PC-9 (cell line): ENCODE measurements at regions of chr11 and their contacts with region 1.

Region 1: DNA sequence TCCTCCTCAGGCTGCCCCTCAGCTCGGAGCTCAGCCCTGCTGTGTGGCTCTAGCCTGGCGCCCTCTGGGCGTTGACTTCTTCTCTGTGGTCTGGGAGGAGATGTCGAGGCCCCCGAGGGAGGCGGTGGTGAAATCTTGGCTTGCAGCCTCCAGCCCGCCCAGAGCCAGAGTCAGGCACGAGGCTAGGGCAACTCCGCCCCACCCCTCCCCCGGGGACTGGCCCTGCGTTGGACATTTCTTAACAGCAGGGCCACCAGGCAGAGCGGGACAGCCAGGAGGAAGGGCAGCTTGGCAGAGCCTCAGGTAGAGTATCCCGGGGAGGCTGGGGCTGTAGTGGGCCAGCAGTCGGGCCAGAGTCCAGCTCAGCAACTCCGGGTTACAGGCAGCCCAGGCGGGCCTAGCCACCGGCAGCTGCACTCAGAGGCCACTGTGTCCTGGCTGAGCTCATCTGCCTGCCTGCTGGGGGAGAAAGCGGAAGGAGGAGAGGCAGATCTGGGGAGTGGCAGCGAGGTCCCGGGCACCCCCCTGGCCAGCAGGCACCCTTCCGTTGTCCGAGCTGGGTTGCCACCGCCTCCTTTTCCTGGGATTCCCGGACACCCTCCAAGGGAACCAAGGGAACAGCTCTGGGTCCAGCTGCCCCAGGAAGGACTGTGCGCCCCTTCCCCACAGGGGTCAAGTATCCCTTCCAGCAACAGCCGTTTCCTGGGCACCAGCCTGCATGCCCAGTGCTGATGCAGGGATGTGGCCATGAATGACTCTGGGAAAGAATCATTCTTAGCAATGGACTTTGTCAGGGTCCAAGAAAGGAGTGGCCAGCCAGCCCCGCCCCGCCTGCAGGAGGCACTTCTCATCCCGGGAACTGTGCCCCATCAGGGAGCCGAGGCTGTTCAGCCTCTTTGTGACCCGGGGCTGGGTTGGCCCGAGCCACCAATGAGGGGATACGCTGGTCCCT is at the start of gene ALDH3B1:
- DNase-seq: peak; percentile 90 to 98
- H3K4me3 ChIP-seq: peak within 1 kb of the TSS; percentile 59
- H3K27ac ChIP-seq: peak within 1 kb of the TSS; percentile 93
- H3K4me1 ChIP-seq: peaks cover 69% of the 10 kb centered on the region
- H3K27me3 ChIP-seq: no peaks in the 10 kb centered on the region
- CTCF ChIP-seq: no peak
- total RNA-seq, gene ALDH3B1: 98.1 and 104 TPM in 2 replicates

Region 2: GRCh38 chr11:66842896-66843775 is 1167.2 kb before region 1 on chr11 and contains the start of gene RCE1:
- CTCF ChIA-PET with region 1: no interaction called
- POLR2A ChIA-PET with region 1: no interaction called
- intact Hi-C with region 1: no loop called
- DNase-seq: peak; percentile 79 to 93
- H3K4me3 ChIP-seq: peak within 1 kb of the TSS; percentile 94
- H3K27ac ChIP-seq: peak within 1 kb of the TSS; percentile 67
- H3K4me1 ChIP-seq: peaks cover 52% of the 10 kb centered on the region
- H3K27me3 ChIP-seq: no peaks in the 10 kb centered on the region
- CTCF ChIP-seq: no peak
- total RNA-seq, gene RCE1: 42.1 and 42.9 TPM in 2 replicates

Region 3: GRCh38 chr11:68020575-68020974 is 10.2 kb after region 1 on chr11:
- CTCF ChIA-PET with region 1: interaction called, 8 read pairs
- POLR2A ChIA-PET with region 1: interaction called, 4 read pairs
- intact Hi-C with region 1: loop called (anchors 1 kb)
- DNase-seq: peak in 1 of 2 experiments; percentile 88
- H3K4me3 ChIP-seq: no peak overlapping the region
- H3K27ac ChIP-seq: no peak overlapping the region
- H3K4me1 ChIP-seq: peaks cover 45% of the 10 kb centered on the region
- H3K27me3 ChIP-seq: no peaks in the 10 kb centered on the region
- CTCF ChIP-seq: peak; percentile 45

Region 4: GRCh38 chr11:68030318-68031138 is 20.2 kb after region 1 on chr11 and contains the start of gene NDUFS8:
- CTCF ChIA-PET with region 1: no interaction called
- POLR2A ChIA-PET with region 1: interaction called, 4 read pairs
- intact Hi-C with region 1: loop called (anchors 1 kb)
- DNase-seq: peak; percentile 96 to 99
- H3K4me3 ChIP-seq: peak within 1 kb of the TSS; percentile 91
- H3K27ac ChIP-seq: peak within 1 kb of the TSS; percentile 87
- H3K4me1 ChIP-seq: peaks cover 36% of the 10 kb centered on the region
- H3K27me3 ChIP-seq: no peaks in the 10 kb centered on the region
- CTCF ChIP-seq: no peak
- total RNA-seq, gene NDUFS8: 270 and 275 TPM in 2 replicates

Region 5: DNA sequence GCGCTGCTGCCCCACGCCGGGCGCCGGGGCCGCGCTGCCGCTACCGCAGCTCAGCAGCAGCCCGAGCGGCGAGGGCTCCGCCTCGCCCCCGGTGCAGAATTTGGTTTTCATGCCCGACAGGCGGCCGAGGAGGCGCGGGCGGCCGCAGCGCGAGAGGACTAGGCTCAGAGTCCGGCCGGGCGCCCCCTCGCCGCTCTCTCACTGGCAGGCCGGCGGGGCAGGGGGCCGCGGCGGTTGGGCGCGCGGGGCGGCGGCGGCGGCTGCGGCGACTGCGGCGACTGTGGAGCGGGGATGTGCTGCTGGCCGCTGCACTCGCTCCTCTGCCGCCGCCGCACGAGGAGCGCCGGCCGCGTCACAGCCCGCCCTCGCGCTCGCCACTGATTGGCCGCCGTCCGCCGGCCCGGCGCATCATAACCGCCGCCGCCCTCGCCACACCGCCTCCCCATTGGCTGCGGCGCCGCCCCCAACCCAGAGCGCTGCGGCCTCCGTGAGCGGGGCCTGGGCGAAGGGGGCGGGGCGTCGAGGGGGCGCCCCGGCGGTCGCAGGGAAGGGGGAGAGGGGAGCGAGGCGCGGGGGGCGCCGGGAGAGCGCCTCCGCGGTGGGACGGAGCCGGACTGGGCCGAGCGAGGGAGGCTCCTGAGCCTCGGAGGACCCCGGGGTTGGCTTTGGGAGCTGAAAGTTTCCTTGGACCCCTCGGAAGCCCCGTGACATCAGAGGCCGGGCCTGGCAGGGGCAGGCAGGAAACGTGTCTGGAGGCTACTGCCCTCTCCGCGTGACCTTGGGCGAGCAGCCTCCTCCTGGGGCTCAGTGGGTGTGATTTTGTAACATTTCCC is 110.9 kb after region 1 on chr11 and contains the start of gene CHKA:
- CTCF ChIA-PET with region 1: no interaction called
- POLR2A ChIA-PET with region 1: interaction called, 38 read pairs
- intact Hi-C with region 1: loop called (anchors 1 kb)
- DNase-seq: peak; percentile 88 to 97
- H3K4me3 ChIP-seq: peak within 1 kb of the TSS; percentile 92
- H3K27ac ChIP-seq: peak within 1 kb of the TSS; percentile 97
- H3K4me1 ChIP-seq: peaks cover 77% of the 10 kb centered on the region
- H3K27me3 ChIP-seq: no peaks in the 10 kb centered on the region
- CTCF ChIP-seq: no peak
- total RNA-seq, gene CHKA: 84.2 and 90.5 TPM in 2 replicates

Region 6: GRCh38 chr11:68146704-68147474 is 136.5 kb after region 1 on chr11:
- CTCF ChIA-PET with region 1: no interaction called
- POLR2A ChIA-PET with region 1: interaction called, 4 read pairs
- intact Hi-C with region 1: loop called (anchors 5 kb)
- DNase-seq: peak; percentile 76 to 96
- H3K4me3 ChIP-seq: no peak overlapping the region
- H3K27ac ChIP-seq: peak overlapping the region; percentile 91
- H3K4me1 ChIP-seq: peaks cover 74% of the 10 kb centered on the region
- H3K27me3 ChIP-seq: no peaks in the 10 kb centered on the region
- CTCF ChIP-seq: no peak

Region 7: DNA sequence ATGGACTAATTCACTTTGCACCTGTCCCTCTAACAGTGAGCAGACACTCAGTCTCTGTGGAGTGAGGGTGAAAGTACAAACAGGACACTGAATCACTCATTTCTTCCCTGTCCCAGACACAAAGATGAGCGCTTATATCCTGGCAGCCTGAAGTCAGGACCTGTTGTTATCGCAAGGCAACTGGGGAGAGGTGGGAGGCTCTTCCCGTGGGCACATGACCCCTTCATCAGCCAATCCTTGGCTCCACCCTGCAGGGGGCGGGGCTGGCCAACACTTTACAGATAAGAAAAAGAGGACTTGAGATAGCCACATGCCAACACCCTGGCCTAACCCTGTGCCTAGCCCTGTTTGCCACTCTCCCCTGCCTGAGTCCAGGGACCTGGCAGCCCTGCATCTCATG is 770.5 kb after region 1 on chr11:
- CTCF ChIA-PET with region 1: no interaction called
- POLR2A ChIA-PET with region 1: interaction called, 14 read pairs
- intact Hi-C with region 1: no loop called
- DNase-seq: peak in 1 of 2 experiments; percentile 11
- H3K4me3 ChIP-seq: no peak overlapping the region
- H3K27ac ChIP-seq: no peak overlapping the region
- H3K4me1 ChIP-seq: peaks cover 19% of the 10 kb centered on the region
- H3K27me3 ChIP-seq: no peaks in the 10 kb centered on the region
- CTCF ChIP-seq: no peak

Region 8: DNA sequence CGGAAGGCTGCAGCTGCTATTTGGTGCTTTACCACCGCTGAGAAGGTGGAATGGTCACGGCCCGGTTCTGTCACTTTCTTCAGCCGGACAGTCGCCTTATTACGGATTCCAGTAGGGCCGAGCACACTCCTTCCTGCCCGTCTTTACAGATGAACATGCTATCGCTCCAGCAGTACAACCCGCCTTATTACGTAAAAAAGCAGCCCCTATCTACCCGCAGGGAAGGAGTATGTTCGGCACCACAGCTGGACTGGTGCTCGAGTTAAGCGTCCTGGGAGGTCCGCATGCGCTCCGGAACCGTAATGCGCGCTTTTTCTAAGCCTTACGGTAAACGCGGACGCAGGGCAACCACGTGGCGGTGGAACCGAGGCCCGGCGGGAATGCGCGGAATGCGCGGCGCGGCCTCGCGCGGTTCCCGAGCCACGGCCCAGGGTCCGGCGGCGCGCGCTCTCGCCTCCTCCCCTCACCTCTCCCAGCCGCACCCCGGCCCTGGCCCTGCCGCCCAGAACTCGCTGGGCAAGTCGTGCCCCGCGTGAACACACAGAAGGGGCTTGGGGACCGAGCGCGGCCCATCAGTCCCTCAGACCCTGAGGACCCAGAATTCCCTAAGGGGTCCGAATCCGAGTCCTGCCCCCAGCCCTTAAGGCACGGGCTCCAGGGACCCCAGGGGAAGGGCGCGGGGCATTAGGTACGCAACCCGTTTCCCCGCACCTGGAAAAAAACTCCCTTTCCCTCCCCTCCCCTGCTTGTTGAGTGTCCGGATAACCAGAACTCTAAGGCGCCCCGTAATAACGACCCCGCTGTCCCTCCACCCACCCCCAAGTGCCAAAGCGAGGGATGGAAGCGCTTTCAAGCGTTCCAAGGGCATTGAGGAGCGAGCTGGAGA is 1626.2 kb after region 1 on chr11:
- CTCF ChIA-PET with region 1: no interaction called
- POLR2A ChIA-PET with region 1: interaction called, 10 read pairs
- intact Hi-C with region 1: no loop called
- DNase-seq: peak; percentile 73 to 94
- H3K4me3 ChIP-seq: peak overlapping the region; percentile 99
- H3K27ac ChIP-seq: peak overlapping the region; percentile 93
- H3K4me1 ChIP-seq: peaks cover 22% of the 10 kb centered on the region; the same call in 1 of the 2 replicates
- H3K27me3 ChIP-seq: no peaks in the 10 kb centered on the region
- CTCF ChIP-seq: no peak